Head of caudate nucleus (tissue), 42 donors: ENCODE measurements at regions of chr12 and their contacts with region 1.

Region 1: GRCh38 chr12:121443193-121443870 is 43.4 kb downstream of the RNF34 start:
- DNase-seq: peak; percentile 74 to 96 (median 90)

Region 2: GRCh38 chr12:121334513-121335343 is 108.6 kb before region 1 on chr12:
- intact Hi-C with region 1: loop called (anchors 5 kb)
- DNase-seq: peak in 16 of 42 donors; percentile 16 to 76 (median 47)

Region 3: GRCh38 chr12:121649819-121650353 is 206.6 kb after region 1 on chr12:
- intact Hi-C with region 1: no loop called
- DNase-seq: no peak